Colonic mucosa (tissue), 4 donors: ENCODE measurements at regions of chr1 and their contacts with region 1.

Region 1: GRCh38 chr1:44609412-44609767 is 64.9 kb downstream of the TMEM53 start:
- DNase-seq: peak; percentile 56
- H3K4me3 ChIP-seq: no peak overlapping the region
- H3K27ac ChIP-seq: no peak overlapping the region
- H3K4me1 ChIP-seq: no peaks in the 10 kb centered on the region
- H3K27me3 ChIP-seq: no peaks in the 10 kb centered on the region
- CTCF ChIP-seq: no peak

Region 2: GRCh38 chr1:43881415-43881814 is 728.0 kb before region 1 on chr1:
- intact Hi-C with region 1: no loop called
- DNase-seq: no peak
- H3K4me3 ChIP-seq: no peak overlapping the region
- H3K27ac ChIP-seq: no peak overlapping the region
- H3K4me1 ChIP-seq: peaks cover 9% of the 10 kb centered on the region
- H3K27me3 ChIP-seq: no peaks in the 10 kb centered on the region
- CTCF ChIP-seq: no peak

Region 3: GRCh38 chr1:44652445-44653106 is 43.2 kb after region 1 on chr1:
- intact Hi-C with region 1: loop called (anchors 2 kb)
- DNase-seq: peak; percentile 80
- H3K4me3 ChIP-seq: no peak overlapping the region
- H3K27ac ChIP-seq: no peak overlapping the region
- H3K4me1 ChIP-seq: no peaks in the 10 kb centered on the region
- H3K27me3 ChIP-seq: no peaks in the 10 kb centered on the region
- CTCF ChIP-seq: peak; percentile 97

Region 4: GRCh38 chr1:44835738-44836675 is 226.6 kb after region 1 on chr1:
- intact Hi-C with region 1: no loop called
- DNase-seq: peak; percentile 91
- H3K4me3 ChIP-seq: no peak overlapping the region
- H3K27ac ChIP-seq: no peak overlapping the region
- H3K4me1 ChIP-seq: no peaks in the 10 kb centered on the region
- H3K27me3 ChIP-seq: no peaks in the 10 kb centered on the region
- CTCF ChIP-seq: peak; percentile 84

Region 5: GRCh38 chr1:44862829-44863401 is 253.5 kb after region 1 on chr1:
- intact Hi-C with region 1: no loop called
- DNase-seq: no peak
- H3K4me3 ChIP-seq: no peak overlapping the region
- H3K27ac ChIP-seq: no peak overlapping the region
- H3K4me1 ChIP-seq: no peaks in the 10 kb centered on the region
- H3K27me3 ChIP-seq: no peaks in the 10 kb centered on the region
- CTCF ChIP-seq: no peak

Region 6: GRCh38 chr1:44985747-44986359 is 376.5 kb after region 1 on chr1:
- intact Hi-C with region 1: no loop called
- DNase-seq: no peak
- H3K4me3 ChIP-seq: peak overlapping the region; percentile 62
- H3K27ac ChIP-seq: peak overlapping the region; percentile 61
- H3K4me1 ChIP-seq: peaks cover 4% of the 10 kb centered on the region
- H3K27me3 ChIP-seq: no peaks in the 10 kb centered on the region
- CTCF ChIP-seq: no peak